Calu3 (cell line): ENCODE measurements at regions of chr18 and their contacts with region 1.

Region 1: GRCh38 chr18:11851146-11851805 is at the start of gene CHMP1B:
- DNase-seq: peak; percentile 96
- H3K4me3 Mint-ChIP-seq: peak within 1 kb of the TSS; percentile 88
- H3K27ac Mint-ChIP-seq: peak within 1 kb of the TSS; percentile 96
- H3K4me1 Mint-ChIP-seq: peaks cover 17% of the 10 kb centered on the region
- H3K27me3 Mint-ChIP-seq: no peaks in the 10 kb centered on the region
- CTCF ChIP-seq: no peak
- total RNA-seq, gene CHMP1B: 44.4 and 47.2 TPM in 2 replicates

Region 2: GRCh38 chr18:11512096-11513030 is 338.9 kb before region 1 on chr18:
- CTCF ChIA-PET with region 1: no interaction called
- intact Hi-C with region 1: no loop called
- DNase-seq: peak; percentile 32
- H3K4me3 Mint-ChIP-seq: no peak overlapping the region
- H3K27ac Mint-ChIP-seq: no peak overlapping the region
- H3K4me1 Mint-ChIP-seq: no peaks in the 10 kb centered on the region
- H3K27me3 Mint-ChIP-seq: peaks cover 17% of the 10 kb centered on the region
- CTCF ChIP-seq: no peak

Region 3: DNA sequence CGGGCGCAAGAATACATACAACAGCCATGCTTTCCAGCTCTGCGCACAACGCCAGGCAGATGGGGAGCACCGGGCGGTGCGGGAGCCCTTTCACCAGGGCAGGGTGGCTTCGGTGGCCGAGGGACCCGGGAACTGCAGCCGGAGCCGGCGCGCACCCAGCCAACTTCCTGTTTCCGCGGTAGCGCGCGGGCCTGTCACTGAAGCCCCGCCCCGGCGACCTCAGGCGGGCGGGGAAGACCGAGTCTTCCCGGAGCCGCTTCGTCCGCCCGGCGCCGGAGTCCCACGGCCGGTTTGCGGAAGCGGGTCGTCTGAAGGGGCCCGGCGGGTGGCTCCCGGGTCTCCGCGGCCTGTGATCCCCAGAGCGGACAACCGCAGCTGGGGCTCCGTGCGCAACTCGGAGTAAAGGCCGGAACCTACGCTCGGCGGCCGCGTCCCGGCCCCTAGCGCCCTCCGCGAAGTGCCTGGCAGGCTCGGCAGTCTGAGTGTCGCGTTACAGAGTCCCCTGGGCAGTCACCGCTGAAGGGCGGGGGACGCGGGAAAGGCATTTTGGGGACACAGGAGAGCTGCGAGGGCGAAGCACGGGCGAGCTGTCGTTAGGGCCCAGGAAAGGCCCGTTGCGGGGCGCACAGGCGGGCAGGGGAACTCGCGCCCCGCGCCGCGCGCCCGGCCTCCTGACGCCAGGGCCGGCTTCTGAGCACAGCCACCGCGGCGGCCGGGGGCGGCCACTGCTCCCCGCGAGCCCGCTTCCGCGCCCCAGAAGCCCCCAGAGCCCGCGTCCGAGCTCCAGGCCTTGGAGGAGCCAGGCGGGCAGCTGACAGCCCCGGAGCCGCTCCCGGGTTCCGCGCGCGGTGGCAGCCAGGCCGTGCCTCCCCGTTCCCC is 57.1 kb after region 1 on chr18 and contains the start of gene MPPE1:
- CTCF ChIA-PET with region 1: no interaction called
- intact Hi-C with region 1: loop called (anchors 2 kb)
- DNase-seq: peak; percentile 89
- H3K4me3 Mint-ChIP-seq: peak within 1 kb of the TSS; percentile 82
- H3K27ac Mint-ChIP-seq: peak within 1 kb of the TSS; percentile 84
- H3K4me1 Mint-ChIP-seq: peaks cover 20% of the 10 kb centered on the region
- H3K27me3 Mint-ChIP-seq: no peaks in the 10 kb centered on the region
- CTCF ChIP-seq: no peak
- total RNA-seq, gene MPPE1: 37.6 and 44.4 TPM in 2 replicates

Region 4: GRCh38 chr18:11980555-11981382 is 129.5 kb after region 1 on chr18:
- CTCF ChIA-PET with region 1: no interaction called
- intact Hi-C with region 1: loop called (anchors 10 kb)
- DNase-seq: peak; percentile 99
- H3K4me3 Mint-ChIP-seq: peak overlapping the region; percentile 85
- H3K27ac Mint-ChIP-seq: peak overlapping the region; percentile 70
- H3K4me1 Mint-ChIP-seq: no peaks in the 10 kb centered on the region
- H3K27me3 Mint-ChIP-seq: no peaks in the 10 kb centered on the region
- CTCF ChIP-seq: peak; percentile 27

Region 5: DNA sequence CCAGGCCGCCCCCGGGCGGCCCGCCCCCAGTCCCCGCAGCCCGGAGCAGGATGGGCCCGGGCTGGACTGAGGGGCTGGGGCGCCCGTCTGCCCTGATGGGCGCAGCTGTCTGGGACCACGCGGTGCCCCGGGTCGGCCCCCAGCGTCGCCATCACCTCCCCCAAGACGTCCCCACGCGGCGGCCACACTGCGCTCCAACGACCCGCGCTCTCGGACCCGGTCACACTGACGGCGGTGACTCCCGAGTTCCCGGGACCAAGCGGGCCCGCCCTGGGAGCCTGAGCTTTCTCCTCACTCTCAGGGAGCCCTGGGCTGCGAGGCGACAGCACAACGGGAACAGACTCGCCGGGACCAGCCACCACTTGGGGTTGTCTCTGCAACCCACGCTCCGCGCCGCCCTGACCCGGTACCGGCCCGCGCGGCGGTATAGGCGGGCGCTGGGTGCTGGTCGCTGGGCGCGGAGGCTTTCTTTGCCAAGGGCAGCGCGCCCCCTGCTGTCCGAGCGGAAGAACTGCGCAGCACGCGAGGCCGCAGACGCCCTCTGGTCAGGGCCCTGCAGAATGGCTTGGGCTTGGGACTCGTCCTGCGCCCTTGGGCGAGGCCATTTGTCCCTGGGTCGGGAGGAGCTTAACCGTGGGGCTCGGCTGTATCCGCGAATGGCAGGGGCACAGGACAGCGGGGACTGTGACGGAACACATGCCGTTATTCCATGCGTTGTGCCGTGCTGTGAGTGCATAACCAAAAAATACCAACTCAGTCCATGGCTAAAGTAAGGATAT is 187.6 kb after region 1 on chr18:
- CTCF ChIA-PET with region 1: no interaction called
- intact Hi-C with region 1: no loop called
- DNase-seq: peak; percentile 85
- H3K4me3 Mint-ChIP-seq: peak overlapping the region; percentile 79
- H3K27ac Mint-ChIP-seq: no peak overlapping the region
- H3K4me1 Mint-ChIP-seq: peaks cover 8% of the 10 kb centered on the region
- H3K27me3 Mint-ChIP-seq: peaks cover 23% of the 10 kb centered on the region
- CTCF ChIP-seq: peak; percentile 99

Region 6: GRCh38 chr18:12076424-12077140 is 225.3 kb after region 1 on chr18:
- CTCF ChIA-PET with region 1: no interaction called
- intact Hi-C with region 1: no loop called
- DNase-seq: peak; percentile 29
- H3K4me3 Mint-ChIP-seq: peak overlapping the region; percentile 52
- H3K27ac Mint-ChIP-seq: no peak overlapping the region
- H3K4me1 Mint-ChIP-seq: no peaks in the 10 kb centered on the region
- H3K27me3 Mint-ChIP-seq: peaks cover 44% of the 10 kb centered on the region
- CTCF ChIP-seq: no peak